GM10248 (cell line): ENCODE measurements at regions of chr11 and their contacts with region 1.

Region 1: DNA sequence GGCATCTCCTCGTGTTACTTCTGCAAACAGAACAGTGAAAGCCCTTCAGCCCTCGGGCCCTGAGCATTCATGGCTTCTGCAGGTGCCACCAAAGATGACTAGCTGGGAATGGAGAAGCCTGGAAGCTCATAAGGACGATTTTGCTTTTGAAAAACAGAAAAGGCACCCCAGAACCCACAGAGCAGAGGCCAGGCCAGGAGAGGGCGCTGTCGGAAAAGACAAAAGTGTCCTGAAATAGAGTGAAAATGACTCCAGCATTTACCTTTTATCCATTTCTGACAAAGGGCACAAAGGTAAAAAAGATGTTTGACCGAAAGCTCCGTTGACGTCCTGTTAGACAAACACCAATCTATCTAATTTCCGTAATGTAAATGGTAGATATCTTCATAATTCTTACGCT is 37.6 kb downstream of the ZNF195 start:
- DNase-seq: peak; percentile 55
- CTCF ChIP-seq: peak; percentile 77

Region 2: GRCh38 chr11:3220521-3221407 is 120.5 kb before region 1 on chr11:
- CTCF ChIA-PET with region 1: no interaction called
- POLR2A ChIA-PET with region 1: no interaction called
- DNase-seq: no peak
- CTCF ChIP-seq: no peak

Region 3: GRCh38 chr11:3356858-3357257 is 15.6 kb after region 1 on chr11:
- CTCF ChIA-PET with region 1: interaction called, 12 read pairs
- POLR2A ChIA-PET with region 1: no interaction called
- DNase-seq: no peak
- CTCF ChIP-seq: no peak

Region 4: GRCh38 chr11:3412837-3413236 is 71.5 kb after region 1 on chr11:
- CTCF ChIA-PET with region 1: interaction called, 65 read pairs
- POLR2A ChIA-PET with region 1: no interaction called
- DNase-seq: no peak
- CTCF ChIP-seq: no peak

Region 5: DNA sequence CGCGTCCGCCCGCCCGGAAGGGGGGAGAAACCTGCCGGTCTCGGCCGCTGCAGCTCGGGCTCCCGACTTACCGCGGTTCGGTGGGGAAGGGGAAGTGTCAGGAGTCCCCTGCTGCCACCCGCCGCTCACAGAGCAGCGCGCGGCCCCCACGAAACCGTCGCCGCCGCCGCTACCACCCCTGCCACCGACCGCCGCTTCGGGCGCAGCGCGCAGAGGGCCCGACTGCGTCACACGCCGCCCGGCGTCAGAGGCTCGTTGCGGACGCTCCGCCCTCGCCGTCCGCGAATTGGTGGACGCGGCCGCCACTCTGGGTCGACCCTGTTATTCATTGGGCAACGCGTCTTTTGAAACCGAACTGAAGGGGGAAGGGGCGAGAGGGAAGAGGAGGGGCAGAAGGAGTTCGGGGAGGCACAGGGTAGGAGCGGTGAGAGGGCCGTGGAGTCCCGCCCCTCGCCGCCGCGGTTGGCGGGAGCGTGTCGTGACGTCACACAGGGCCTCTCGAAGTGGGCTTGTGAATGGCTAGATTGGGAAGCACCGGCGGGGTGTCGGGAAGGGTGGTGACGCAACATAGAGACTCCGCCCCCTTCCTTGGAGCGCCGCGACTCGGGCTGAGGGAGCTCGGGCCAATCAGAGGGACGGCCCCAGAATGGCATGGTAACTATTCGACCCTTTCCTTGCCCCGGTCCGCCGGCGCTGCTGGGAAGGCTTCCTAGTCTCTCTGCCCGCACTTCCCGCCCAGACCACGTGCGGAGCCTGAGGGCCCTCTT is 456.2 kb after region 1 on chr11 and contains the start of gene NUP98:
- CTCF ChIA-PET with region 1: no interaction called
- POLR2A ChIA-PET with region 1: no interaction called
- DNase-seq: peak; percentile 99
- CTCF ChIP-seq: no peak